ENCODE measurements at regions of chr2 and their contacts with region 1.

Region 1: GRCh38 chr2:121722479-121722878 is 14.2 kb downstream of the NIFK start:
- DNase-seq: peak in 1 of 14 experiments; percentile 44
- ATAC-seq: no peak
- H3K4me3 ChIP-seq: no peak overlapping the region
- H3K4me3 Mint-ChIP-seq: no peak overlapping the region
- H3K27ac ChIP-seq: no peak overlapping the region
- H3K27ac Mint-ChIP-seq: no peak overlapping the region
- H3K4me1 ChIP-seq: peaks cover 8% of the 10 kb centered on the region
- H3K4me1 Mint-ChIP-seq: peaks cover 6% of the 10 kb centered on the region
- H3K27me3 ChIP-seq: no peaks in the 10 kb centered on the region
- H3K27me3 Mint-ChIP-seq: no peaks in the 10 kb centered on the region
- CTCF ChIP-seq: no peak

Region 2: GRCh38 chr2:121400201-121400600 is 322.3 kb before region 1 on chr2:
- CTCF ChIA-PET with region 1: interaction called, 7 read pairs
- POLR2A ChIA-PET with region 1: interaction called, 6 read pairs
- intact Hi-C with region 1: loop called in 1 of 2 experiments (anchors 1 kb)
- DNase-seq: no peak
- ATAC-seq: no peak
- H3K4me3 ChIP-seq: no peak overlapping the region
- H3K4me3 Mint-ChIP-seq: no peak overlapping the region
- H3K27ac ChIP-seq: no peak overlapping the region
- H3K27ac Mint-ChIP-seq: no peak overlapping the region
- H3K4me1 ChIP-seq: no peaks in the 10 kb centered on the region
- H3K4me1 Mint-ChIP-seq: no peaks in the 10 kb centered on the region
- H3K27me3 ChIP-seq: no peaks in the 10 kb centered on the region
- H3K27me3 Mint-ChIP-seq: no peaks in the 10 kb centered on the region
- CTCF ChIP-seq: no peak

Region 3: DNA sequence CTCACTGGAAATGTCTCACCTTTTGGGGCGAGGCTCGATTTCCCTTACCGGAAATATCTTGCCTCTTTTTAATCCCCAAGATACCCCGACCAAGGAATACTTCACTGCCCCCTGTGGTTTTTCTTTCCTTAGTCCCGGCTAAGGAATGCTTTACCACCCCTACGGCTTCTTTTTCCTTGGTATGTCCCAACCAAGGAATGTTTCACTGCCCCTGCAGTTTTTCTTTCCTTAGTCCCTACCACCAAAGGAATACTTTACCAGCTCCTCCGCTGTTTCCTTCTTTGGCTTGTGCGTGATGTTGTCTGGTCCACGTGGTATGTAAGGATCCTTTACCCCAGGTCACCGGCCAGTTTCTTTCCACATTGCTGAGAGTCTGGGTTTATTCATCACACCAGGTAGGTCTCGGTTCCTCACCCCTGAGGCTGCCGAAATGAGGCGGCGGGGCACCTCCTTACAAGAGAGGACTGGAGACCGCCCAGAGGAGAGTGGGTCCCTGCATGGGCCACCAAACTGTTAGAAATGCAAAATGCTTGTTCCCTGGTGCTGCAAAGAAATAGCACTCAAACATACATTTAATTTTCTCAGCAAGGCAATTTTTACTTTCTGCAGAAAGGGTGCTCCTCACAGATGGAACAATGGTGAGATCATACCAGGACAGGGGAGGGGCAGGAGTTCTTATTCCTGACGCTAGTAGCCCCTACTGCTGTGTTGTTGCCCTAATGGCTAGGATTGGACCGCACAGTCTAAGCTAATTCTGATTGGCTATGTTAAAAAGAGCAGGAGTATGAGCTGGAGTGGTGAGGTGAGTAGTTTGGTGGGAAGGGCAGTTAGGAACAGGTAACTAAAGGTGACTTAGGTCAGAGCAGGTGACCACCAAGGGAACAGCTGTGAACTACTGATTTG is 39.8 kb before region 1 on chr2:
- CTCF ChIA-PET with region 1: no interaction called
- POLR2A ChIA-PET with region 1: no interaction called
- intact Hi-C with region 1: no loop called
- DNase-seq: no peak
- ATAC-seq: no peak
- H3K4me3 ChIP-seq: no peak overlapping the region
- H3K4me3 Mint-ChIP-seq: no peak overlapping the region
- H3K27ac ChIP-seq: no peak overlapping the region
- H3K27ac Mint-ChIP-seq: no peak overlapping the region
- H3K4me1 ChIP-seq: no peaks in the 10 kb centered on the region
- H3K4me1 Mint-ChIP-seq: no peaks in the 10 kb centered on the region
- H3K27me3 ChIP-seq: no peaks in the 10 kb centered on the region
- H3K27me3 Mint-ChIP-seq: no peaks in the 10 kb centered on the region
- CTCF ChIP-seq: no peak

Region 4: DNA sequence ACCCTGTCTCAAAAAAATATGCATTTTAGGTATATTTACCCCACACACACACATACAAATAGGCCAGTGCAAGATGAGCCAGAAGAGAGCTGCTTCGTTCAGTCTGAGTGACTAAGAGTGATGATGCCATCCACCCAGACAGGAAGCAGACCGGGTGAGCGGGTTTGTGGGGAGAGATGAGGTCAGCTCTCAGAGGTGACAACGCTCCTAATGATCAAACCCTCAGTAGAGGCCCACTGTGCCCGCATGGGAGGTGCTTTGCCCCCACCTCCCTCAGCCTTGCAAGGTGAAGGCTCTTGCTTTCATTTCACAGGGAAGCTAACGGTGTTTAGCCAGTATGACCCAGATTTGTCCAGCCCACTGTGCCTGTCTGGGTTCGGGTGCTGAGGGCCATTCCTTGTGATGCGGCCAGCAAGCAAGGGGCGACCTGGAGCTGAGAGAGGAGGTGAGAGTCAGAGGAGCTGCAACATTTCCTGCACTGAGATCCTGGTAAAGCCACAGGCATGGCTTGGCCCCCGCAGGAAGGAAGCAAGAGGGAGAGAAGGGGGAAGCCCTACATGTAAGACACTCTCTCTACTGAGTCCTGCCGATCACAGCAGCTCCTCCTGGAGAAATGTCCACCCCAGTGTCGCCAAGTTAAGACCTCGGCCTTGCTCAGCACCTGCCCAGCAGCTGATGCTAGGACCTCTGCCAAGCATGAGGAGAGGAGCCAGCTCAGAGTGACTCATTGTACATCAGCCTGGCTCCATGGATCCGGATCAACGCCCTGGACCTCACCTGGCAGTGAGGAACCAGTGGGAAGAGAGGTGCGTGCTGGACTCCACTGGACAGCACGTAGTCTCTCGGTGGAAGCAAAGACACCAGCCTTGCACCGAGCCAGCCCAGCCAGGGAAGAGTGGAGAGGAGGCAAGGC is 22.8 kb before region 1 on chr2:
- CTCF ChIA-PET with region 1: interaction called, 11 read pairs
- POLR2A ChIA-PET with region 1: no interaction called
- intact Hi-C with region 1: no loop called
- DNase-seq: peak; percentile 63 to 94 (median 75)
- ATAC-seq: peak; percentile 94
- H3K4me3 ChIP-seq: peak overlapping the region; percentile 39
- H3K4me3 Mint-ChIP-seq: peak overlapping the region; percentile 75
- H3K27ac ChIP-seq: peak overlapping the region; percentile 58 to 74
- H3K27ac Mint-ChIP-seq: peak overlapping the region; percentile 88
- H3K4me1 ChIP-seq: peaks cover 28% of the 10 kb centered on the region
- H3K4me1 Mint-ChIP-seq: peaks cover 38% of the 10 kb centered on the region
- H3K27me3 ChIP-seq: no peaks in the 10 kb centered on the region
- H3K27me3 Mint-ChIP-seq: no peaks in the 10 kb centered on the region
- CTCF ChIP-seq: no peak

Region 5: DNA sequence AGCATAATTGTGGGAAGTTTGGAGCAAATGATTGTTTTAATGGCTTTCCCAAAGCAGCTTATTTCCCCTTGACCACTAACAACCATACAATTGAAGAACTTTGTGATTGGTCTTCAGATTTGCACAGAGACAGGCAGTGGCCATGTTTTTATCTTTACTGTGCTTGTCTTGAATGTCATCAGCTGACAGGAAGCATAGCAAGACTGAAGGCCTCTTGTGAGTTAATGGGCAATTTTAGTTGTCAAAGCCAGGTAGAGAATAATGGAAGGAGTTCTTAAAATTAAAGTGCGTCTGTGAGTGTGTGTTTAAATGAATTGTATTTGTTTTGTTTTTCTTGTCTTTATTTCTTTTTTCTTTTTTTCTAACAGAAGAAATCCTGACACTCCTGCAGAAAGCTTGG is 842.9 kb after region 1 on chr2:
- CTCF ChIA-PET with region 1: no interaction called
- POLR2A ChIA-PET with region 1: no interaction called
- intact Hi-C with region 1: no loop called
- DNase-seq: no peak
- ATAC-seq: no peak
- H3K4me3 ChIP-seq: no peak overlapping the region
- H3K4me3 Mint-ChIP-seq: no peak overlapping the region
- H3K27ac ChIP-seq: no peak overlapping the region
- H3K27ac Mint-ChIP-seq: no peak overlapping the region
- H3K4me1 ChIP-seq: no peaks in the 10 kb centered on the region
- H3K4me1 Mint-ChIP-seq: no peaks in the 10 kb centered on the region
- H3K27me3 ChIP-seq: no peaks in the 10 kb centered on the region
- H3K27me3 Mint-ChIP-seq: no peaks in the 10 kb centered on the region
- CTCF ChIP-seq: no peak

Measured in CD4-positive, alpha-beta T cell (primary cell).